ENCODE measurements at regions of chr2 and their contacts with region 1.

Region 1: DNA sequence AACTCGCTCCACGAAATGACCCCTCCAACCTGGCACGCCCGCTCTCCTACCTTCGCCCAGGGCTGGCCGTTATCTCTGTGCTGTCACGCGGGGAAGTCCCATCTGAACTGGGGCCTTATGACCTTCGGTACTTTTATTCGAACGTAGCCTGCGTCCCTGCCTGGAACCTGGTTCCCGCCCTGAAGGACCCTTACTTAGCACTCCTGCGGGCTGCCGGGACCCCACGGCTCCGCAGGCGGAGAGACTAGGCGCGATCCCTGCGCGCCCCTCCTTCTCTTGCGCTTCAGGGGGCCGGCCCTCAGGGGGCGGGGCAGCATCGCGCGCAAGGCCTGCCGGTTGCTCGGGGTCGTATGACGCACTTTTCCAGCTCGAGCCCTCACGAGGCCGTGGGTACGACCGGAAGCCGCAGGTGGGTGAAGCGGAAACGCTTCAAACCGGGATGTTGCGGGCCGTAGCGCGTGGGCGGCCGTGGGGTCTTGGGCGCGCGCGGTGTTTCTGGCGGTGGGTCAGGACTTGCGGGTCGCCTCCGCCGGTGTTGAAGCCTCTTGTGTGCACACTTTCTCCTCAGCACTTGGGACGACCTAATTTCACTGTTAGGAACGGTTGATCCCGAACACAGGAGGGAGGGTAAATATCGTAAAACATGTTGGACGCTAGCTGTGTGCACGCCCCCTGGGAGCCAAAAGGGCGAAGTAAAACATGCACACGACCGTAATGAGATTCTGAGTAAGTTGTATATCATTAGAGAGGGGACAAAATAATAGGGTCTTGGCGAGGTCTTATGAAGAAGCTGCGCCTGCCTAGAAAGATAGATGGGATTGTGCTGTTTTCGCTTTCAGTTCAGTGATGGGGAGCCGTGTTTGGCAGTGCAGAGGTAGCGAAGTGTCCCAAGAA is at the starts of genes LIPT1 and TSGA10:
- DNase-seq: peak; percentile 93
- total RNA-seq, gene LIPT1: 6.6 TPM
- total RNA-seq, gene TSGA10: 1.6 TPM

Region 2: DNA sequence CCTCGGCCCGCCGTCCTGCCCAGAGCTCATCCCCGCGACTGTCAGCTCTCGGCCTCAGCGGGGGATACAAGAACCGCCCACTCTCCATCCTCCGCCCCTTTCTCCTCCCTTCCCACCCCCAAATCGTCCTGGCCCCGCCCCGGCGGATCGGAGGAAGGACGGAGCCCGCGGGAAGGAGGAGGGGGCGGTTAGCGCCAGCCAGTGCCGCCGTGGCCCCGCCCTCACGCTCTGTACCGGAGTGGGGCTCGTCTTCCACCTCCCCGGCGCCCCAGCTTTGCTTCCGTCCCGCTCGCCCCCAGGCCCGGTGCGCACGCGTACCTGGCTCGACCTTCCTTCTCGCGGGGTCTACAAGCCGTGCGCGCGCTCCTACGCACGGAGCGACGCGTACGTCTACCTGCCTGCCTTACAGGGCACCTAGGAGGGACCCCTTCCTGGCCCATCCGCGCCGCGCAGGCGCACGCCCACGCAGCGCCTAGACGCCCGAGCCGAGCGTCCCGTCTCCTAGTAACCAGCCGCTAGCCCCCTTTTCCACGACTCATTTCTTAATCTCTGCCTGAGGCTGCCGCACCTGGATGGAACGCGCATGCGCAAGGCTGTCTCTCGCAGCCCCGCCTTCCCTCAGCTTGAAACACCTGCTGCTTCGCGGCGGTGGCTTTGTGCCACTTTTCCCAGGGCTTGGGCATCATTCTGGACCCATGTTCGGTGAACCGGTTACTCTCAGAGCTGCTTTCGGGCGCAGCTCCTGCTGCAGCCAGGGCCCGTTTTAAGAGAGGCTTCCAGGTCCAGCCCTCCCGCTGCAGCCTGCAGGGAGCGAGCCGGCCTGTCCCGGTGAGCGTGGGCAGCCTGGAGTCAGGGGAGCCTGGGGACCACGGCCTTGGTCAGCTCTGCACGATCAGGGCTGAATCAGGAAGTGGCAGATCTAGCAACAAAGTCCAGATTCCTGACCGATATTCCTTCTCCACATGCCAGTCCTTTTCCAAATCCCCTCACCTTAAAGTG is 13.5 kb before region 1 on chr2 and contains the start of gene C2orf15:
- intact Hi-C with region 1: loop called (anchors 2 kb)
- DNase-seq: peak; percentile 98
- total RNA-seq, gene C2orf15: not detected

Region 3: DNA sequence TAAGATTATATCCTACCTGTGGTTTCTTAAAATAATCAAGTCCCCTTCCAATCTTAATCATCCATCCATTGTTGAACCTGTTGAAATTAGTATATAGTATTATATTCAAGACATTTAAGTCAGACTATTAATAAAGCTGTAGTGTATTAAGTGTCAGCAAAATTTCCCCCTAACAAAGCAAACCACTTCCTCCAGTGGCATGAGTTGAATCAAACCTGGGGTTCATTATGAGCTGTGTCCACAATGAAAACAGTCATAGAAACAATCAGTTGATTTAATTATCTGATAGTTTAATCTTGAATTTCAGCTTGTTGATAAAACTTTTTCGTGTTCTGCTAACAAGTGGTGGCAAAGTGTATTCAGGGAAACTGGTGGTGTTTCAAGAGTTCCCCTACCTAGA is 14.6 kb after region 1 on chr2:
- intact Hi-C with region 1: no loop called
- DNase-seq: no peak

Region 4: GRCh38 chr2:99451280-99451679 is 296.4 kb after region 1 on chr2:
- intact Hi-C with region 1: no loop called
- DNase-seq: no peak

Measured in cardiac septum (tissue), 1 donor.